GM18951 (cell line): ENCODE measurements at regions of chr11 and their contacts with region 1.

Region 1: GRCh38 chr11:120182790-120183491 is 27.9 kb upstream of the OAF start:
- POLR2A ChIP-seq: no peak

Region 2: DNA sequence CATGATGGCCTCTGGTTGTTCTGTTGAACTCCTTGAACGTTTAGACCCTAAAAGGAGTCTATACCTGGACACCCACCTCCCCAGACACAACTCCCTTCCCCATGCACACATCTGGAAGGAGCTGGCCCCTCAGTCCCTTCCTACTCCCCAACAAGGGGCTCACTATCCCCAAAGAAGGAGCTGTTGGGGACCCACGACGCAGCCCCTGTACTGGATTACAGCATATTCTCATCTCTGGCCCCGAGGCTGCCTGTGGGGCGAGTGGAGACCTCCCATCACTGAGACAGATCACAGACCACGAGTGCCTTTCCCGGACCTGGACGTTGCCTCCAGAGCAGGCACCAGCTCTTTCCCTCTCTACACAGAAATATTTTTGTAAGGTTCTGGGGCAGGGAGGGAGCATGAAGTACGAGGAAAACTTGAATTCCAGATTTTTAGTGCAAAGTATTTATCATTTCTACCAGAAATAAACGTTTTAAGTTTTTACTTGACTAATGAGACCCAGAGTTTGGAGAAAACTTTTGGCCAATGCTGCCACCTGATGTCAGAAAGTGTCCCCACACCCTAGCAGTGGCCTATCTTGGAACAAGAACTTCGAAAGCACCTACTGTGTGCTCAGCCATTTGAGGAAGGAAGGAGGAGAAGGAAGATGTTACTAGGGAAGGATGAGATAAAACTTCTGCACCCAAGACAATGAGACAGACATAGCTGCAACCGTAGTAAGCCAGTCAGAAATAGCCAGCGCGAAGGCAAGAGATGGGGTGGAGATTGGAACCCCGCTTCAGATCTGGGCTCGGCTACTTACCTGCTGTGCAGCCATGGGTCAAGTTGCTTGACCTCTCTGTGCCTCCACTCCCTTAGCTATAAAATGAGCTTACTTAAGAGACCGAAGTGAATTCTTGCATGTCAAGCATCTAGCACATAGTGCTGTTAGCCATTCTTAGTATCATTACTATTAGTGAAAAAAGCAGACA is 46.8 kb after region 1 on chr11:
- in situ Hi-C with region 1: loop called (anchors 5 kb)
- POLR2A ChIP-seq: no peak